ENCODE measurements at regions of chr11 and their contacts with region 1.

Region 1: DNA sequence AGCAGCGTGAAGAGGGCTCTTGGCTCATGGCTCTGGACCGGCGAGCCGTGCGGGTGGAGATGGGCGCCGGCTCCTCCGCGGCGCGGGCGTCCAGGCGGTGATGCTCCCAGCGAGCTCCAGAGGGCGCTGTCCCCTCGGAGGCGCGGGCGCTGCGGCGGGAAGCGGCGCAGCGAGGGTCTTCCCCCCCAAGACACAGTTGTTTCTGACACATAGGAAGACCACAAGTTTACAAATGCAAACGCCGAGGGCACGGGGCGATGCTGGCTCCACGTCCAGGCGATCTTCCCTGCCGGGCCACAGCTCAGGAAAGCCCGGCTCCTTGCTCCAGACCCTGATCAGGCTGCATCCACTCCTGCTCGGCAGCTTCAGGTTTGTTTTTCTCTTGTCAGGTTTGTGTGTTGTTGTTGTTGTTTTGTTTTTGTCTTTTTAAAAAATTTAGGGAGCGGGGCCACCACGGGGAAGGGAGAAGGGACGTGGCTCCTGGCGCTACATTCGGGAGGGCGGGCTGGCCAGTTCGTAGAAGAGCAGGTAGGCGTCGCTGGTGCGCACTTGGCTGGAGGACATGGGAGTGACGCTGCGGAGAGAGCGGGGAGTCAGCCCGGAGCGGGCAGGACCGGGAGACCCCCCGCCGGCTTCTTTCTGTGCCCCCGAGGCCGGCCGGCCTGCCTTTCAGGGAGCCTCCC is 10.0 kb upstream of the MFRP start:
- DNase-seq: peak; percentile 52 to 87 (median 68)
- ATAC-seq: peak; percentile 94
- H3K4me3 ChIP-seq: peak overlapping the region; percentile 62
- H3K4me3 Mint-ChIP-seq: peak overlapping the region; percentile 89
- H3K27ac ChIP-seq: no peak overlapping the region
- H3K27ac Mint-ChIP-seq: peak overlapping the region; percentile 52
- H3K4me1 ChIP-seq: peaks cover 14% of the 10 kb centered on the region
- H3K4me1 Mint-ChIP-seq: peaks cover 5% of the 10 kb centered on the region
- H3K27me3 ChIP-seq: peaks cover 4 to 17% of the 10 kb centered on the region in 2 experiments
- H3K27me3 Mint-ChIP-seq: peaks cover 40% of the 10 kb centered on the region
- CTCF ChIP-seq: peak; percentile 99

Region 2: GRCh38 chr11:119368121-119369034 is 11.9 kb after region 1 on chr11:
- CTCF ChIA-PET with region 1: interaction called, 66 read pairs
- POLR2A ChIA-PET with region 1: interaction called, 3 read pairs
- intact Hi-C with region 1: no loop called
- DNase-seq: no peak
- ATAC-seq: no peak
- H3K4me3 ChIP-seq: no peak overlapping the region
- H3K4me3 Mint-ChIP-seq: no peak overlapping the region
- H3K27ac ChIP-seq: no peak overlapping the region
- H3K27ac Mint-ChIP-seq: no peak overlapping the region
- H3K4me1 ChIP-seq: peaks cover 17% of the 10 kb centered on the region
- H3K4me1 Mint-ChIP-seq: peaks cover 7% of the 10 kb centered on the region
- H3K27me3 ChIP-seq: peaks cover 41 to 51% of the 10 kb centered on the region in 2 experiments
- H3K27me3 Mint-ChIP-seq: peaks cover 76% of the 10 kb centered on the region
- CTCF ChIP-seq: no peak

Region 3: DNA sequence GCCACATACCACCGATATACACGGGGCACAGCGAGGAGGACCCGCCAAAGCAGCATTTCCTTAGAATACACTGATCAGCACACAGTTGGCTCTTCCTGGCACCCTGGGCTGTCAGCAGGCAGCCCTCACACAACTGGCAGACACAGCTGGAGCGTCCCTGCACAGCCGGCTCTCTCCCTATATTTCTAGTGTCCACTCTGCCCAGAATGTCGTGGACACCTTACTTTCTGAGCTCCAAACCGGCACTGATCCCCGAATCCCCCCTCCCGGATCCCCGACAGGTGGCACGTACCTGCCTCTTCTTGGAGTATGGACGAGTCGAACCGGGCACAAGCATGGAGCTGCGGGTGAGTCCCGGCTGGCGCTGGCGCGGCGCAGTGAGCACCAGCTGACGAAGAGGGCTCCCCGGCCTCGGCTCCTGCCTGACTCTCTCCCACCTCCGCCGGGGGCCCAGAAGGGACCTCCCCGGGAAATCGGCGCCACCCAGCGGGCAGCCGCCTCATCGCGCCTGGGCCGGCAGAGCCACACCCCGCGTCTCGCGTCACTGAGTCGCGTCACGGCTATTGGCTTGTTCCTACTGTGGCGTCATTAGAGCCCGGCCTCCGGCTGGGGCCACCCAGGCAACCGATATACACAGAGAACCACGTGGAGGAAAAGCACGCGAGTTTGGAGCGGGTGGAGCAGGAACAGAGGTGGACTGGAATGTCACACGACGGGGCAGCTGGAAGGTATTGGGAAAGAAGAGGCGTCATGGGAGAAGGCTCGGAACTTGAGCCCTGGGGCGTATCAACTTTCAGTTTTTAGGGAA is 24.9 kb after region 1 on chr11 and contains the start of gene USP2:
- CTCF ChIA-PET with region 1: interaction called, 66 read pairs
- POLR2A ChIA-PET with region 1: interaction called, 5 read pairs
- intact Hi-C with region 1: loop called (anchors 1 kb)
- DNase-seq: peak; percentile 90 to 98 (median 96)
- ATAC-seq: peak; percentile 95
- H3K4me3 ChIP-seq: peak within 1 kb of the TSS; percentile 71
- H3K4me3 Mint-ChIP-seq: peak within 1 kb of the TSS; percentile 36
- H3K27ac ChIP-seq: peak within 1 kb of the TSS in 1 of 2 donors; percentile 34
- H3K27ac Mint-ChIP-seq: no peak within 1 kb of the TSS
- H3K4me1 ChIP-seq: peaks cover 26% of the 10 kb centered on the region
- H3K4me1 Mint-ChIP-seq: no peaks in the 10 kb centered on the region
- H3K27me3 ChIP-seq: peaks cover 0 to 5% of the 10 kb centered on the region in 2 experiments
- H3K27me3 Mint-ChIP-seq: no peaks in the 10 kb centered on the region
- CTCF ChIP-seq: peak; percentile 94
- total RNA-seq, gene USP2: 2.0 to 2.6 TPM

Region 4: GRCh38 chr11:119728651-119729580 is 372.4 kb after region 1 on chr11 and contains the start of gene NECTIN1:
- CTCF ChIA-PET with region 1: interaction called, 5 read pairs
- POLR2A ChIA-PET with region 1: no interaction called
- intact Hi-C with region 1: loop called in 1 of 2 experiments (anchors 10 kb)
- DNase-seq: peak; percentile 64 to 92 (median 81)
- ATAC-seq: peak; percentile 83
- H3K4me3 ChIP-seq: peak within 1 kb of the TSS; percentile 61
- H3K4me3 Mint-ChIP-seq: peak within 1 kb of the TSS; percentile 99
- H3K27ac ChIP-seq: no peak within 1 kb of the TSS
- H3K27ac Mint-ChIP-seq: peak within 1 kb of the TSS; percentile 83
- H3K4me1 ChIP-seq: peaks cover 25% of the 10 kb centered on the region
- H3K4me1 Mint-ChIP-seq: peaks cover 5% of the 10 kb centered on the region
- H3K27me3 ChIP-seq: peaks cover 13 to 27% of the 10 kb centered on the region in 2 experiments
- H3K27me3 Mint-ChIP-seq: peaks cover 26% of the 10 kb centered on the region
- CTCF ChIP-seq: peak; percentile 91
- total RNA-seq, gene NECTIN1: 2.5 to 3.4 TPM

Region 5: DNA sequence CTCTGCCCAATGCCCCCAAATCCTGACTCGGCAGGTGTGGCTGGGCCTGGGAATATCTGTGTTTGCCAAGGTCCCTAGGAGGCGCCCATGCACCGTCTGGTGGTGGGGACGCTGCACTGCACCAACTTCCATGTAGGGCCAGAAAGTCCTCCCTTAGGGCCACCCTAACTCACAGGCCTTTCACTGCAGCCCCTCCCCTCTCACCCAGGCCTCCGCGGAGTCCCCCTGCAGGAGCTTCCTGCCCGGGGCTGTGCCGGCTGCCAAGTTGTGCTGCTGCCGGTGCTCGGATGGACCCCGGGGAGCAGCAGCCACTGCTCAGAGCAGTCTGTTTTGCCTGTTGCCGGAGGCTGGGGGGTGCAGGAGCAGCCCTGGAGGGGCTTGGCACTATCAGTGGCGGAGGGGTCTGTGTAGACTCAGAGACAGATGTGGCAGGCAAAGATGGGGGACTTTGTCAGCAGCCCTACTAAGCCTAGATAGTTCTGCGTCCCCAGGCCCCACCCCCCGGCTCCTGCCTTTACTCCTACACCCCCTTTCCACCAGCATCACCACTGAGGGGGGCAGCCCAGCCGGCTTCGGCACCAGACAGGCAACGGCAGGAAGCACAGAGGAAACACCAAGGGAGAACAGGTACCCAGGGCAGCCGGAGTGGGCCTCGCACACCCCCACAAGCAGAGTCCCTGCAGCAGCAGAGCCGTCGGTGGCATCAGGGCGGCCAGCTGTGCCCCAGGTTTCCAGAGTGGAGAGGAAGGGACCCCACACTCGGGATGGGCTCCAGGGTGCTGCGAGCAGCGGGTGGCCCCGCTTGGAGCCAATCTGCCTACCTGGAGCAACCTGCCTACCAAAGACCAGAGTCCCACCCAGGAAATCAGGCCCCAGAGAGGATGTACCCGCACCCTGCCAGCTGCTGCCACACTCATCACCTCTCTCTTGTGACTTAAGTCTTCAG is 657.1 kb after region 1 on chr11:
- CTCF ChIA-PET with region 1: no interaction called
- POLR2A ChIA-PET with region 1: no interaction called
- intact Hi-C with region 1: no loop called
- DNase-seq: peak in 1 of 14 experiments; percentile 3
- ATAC-seq: no peak
- H3K4me3 ChIP-seq: no peak overlapping the region
- H3K4me3 Mint-ChIP-seq: no peak overlapping the region
- H3K27ac ChIP-seq: no peak overlapping the region
- H3K27ac Mint-ChIP-seq: no peak overlapping the region
- H3K4me1 ChIP-seq: no peaks in the 10 kb centered on the region
- H3K4me1 Mint-ChIP-seq: no peaks in the 10 kb centered on the region
- H3K27me3 ChIP-seq: peaks cover 16 to 18% of the 10 kb centered on the region in 2 experiments
- H3K27me3 Mint-ChIP-seq: peaks cover 76% of the 10 kb centered on the region
- CTCF ChIP-seq: no peak

Measured in CD4-positive, alpha-beta T cell (primary cell).